Activated CD4-positive, alpha-beta memory T cell treated with anti-CD3 and anti-CD28 coated beads, Interleukin-2, amount 10 ng/mL, durations not matched to agents 7 days and 5 days (primary cell): ENCODE measurements at regions of chr3 and their contacts with region 1.

Region 1: DNA sequence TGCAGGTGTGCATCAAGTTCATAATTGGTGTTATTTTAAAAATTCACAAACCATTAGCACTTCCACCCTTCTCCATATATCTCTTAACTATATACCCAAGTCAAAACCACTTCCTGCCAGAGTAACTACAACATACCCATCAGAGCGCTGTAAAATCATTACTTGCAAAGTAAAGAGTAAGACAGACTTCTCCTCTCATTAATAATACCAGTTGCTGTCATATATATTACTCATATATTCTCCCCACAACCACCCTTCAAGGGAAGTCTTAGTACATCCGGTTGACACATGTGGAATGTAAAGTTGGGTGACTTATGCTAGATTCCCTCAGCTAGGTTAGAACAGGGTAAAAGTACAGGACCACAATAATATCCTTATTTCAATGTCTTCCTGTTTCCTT is 5.6 kb downstream of the TERC start:
- DNase-seq: no peak
- H3K4me3 Mint-ChIP-seq: no peak overlapping the region
- H3K27ac Mint-ChIP-seq: peak overlapping the region; percentile 38
- H3K4me1 Mint-ChIP-seq: peaks cover 42% of the 10 kb centered on the region
- H3K27me3 Mint-ChIP-seq: peaks cover 8% of the 10 kb centered on the region

Region 2: GRCh38 chr3:169744366-169745054 is 14.7 kb before region 1 on chr3:
- CTCF ChIA-PET with region 1: no interaction called
- POLR2A ChIA-PET with region 1: no interaction called
- DNase-seq: no peak
- H3K4me3 Mint-ChIP-seq: no peak overlapping the region
- H3K27ac Mint-ChIP-seq: no peak overlapping the region
- H3K4me1 Mint-ChIP-seq: peaks cover 7% of the 10 kb centered on the region
- H3K27me3 Mint-ChIP-seq: peaks cover 17% of the 10 kb centered on the region

Region 3: GRCh38 chr3:169772897-169773828 is 13.9 kb after region 1 on chr3 and contains the start of gene MYNN:
- CTCF ChIA-PET with region 1: interaction called, 29 read pairs
- POLR2A ChIA-PET with region 1: interaction called, 53 read pairs
- DNase-seq: peak; percentile 93
- H3K4me3 Mint-ChIP-seq: peak within 1 kb of the TSS; percentile 93
- H3K27ac Mint-ChIP-seq: peak within 1 kb of the TSS; percentile 100
- H3K4me1 Mint-ChIP-seq: peaks cover 43% of the 10 kb centered on the region
- H3K27me3 Mint-ChIP-seq: no peaks in the 10 kb centered on the region
- total RNA-seq, gene MYNN: 14.9 to 15.6 TPM